ENCODE measurements at regions of chr12 and their contacts with region 1.

Region 1: DNA sequence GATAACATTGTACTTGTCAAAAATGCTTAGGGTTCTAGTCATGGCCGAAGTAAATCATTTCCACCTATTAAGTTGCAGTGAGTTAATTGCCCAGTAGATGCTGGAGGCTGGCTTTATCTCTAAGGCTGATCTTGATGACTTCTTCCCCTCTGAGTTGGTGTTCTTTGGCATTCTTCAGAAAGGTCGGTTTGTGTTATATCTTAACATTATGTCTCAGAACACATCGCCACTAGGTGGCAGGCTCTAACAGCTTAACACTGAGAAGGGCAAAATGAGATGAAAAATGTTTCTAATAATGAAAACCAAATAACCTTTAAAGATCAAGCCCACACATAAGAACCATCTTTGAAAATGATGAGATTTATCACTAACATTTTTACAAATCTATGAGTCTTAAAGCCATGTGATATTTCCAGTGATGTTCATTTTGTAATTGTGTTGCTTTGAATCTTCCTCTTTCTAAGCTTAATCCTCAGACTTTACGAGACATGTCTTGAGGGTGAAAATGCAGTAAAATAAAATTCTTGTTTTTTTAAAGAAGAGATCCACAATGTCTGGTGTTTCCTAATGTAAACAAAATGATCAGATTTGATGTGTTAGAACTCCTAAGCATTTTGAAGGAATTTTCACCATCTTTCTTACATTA is 28.6 kb downstream of the SUDS3 start:
- DNase-seq: peak; percentile 73
- H3K4me3 Mint-ChIP-seq: no peak overlapping the region
- H3K27ac Mint-ChIP-seq: no peak overlapping the region
- H3K4me1 Mint-ChIP-seq: no peaks in the 10 kb centered on the region
- H3K27me3 Mint-ChIP-seq: no peaks in the 10 kb centered on the region
- CTCF ChIP-seq: peak; percentile 65

Region 2: DNA sequence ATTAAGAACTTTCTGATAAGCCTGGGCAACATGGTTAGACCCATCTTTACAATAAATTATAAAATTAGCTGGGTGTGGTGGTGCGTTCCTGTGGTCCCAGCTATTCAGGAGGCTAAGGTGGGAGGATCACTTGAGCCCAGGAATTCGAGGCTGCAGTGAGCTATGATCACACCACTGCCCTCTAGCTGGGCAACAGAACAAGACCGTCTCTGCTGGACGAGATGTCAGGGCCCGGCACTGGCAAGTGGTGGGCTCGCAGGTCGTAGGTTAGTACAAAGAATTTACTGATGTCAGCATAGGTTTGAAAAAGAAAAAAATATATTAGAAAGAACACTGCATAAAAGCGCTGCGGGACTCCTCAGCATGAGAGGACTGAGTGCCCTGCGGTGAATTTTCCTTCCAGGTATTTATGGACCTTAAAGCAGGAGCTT is 285.5 kb before region 1 on chr12:
- CTCF ChIA-PET with region 1: no interaction called
- intact Hi-C with region 1: no loop called
- DNase-seq: no peak
- H3K4me3 Mint-ChIP-seq: no peak overlapping the region
- H3K27ac Mint-ChIP-seq: no peak overlapping the region
- H3K4me1 Mint-ChIP-seq: peaks cover 19% of the 10 kb centered on the region
- H3K27me3 Mint-ChIP-seq: no peaks in the 10 kb centered on the region
- CTCF ChIP-seq: no peak

Region 3: DNA sequence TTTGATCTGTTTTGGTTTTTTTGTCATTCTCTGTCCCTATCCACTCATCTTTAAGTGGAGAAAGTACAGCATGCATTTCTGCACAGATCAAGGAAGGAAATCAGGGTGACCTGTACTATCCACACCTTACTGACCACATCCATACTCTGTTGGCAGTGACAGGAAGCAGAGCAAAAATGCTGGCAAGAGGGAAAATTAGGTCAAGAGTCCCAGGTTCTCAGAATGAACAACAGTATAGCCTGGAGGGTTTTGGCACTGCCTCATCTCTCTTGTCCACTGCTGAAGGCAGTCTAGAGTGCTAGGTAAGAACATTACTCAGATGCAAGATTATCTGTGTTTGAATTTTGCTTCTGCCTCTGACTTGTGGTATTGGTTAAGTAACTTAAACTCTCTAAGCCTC is 102.9 kb before region 1 on chr12:
- CTCF ChIA-PET with region 1: no interaction called
- intact Hi-C with region 1: no loop called
- DNase-seq: peak; percentile 45
- H3K4me3 Mint-ChIP-seq: no peak overlapping the region
- H3K27ac Mint-ChIP-seq: no peak overlapping the region
- H3K4me1 Mint-ChIP-seq: peaks cover 38% of the 10 kb centered on the region
- H3K27me3 Mint-ChIP-seq: no peaks in the 10 kb centered on the region
- CTCF ChIP-seq: no peak

Region 4: GRCh38 chr12:118840399-118840798 is 435.4 kb after region 1 on chr12:
- CTCF ChIA-PET with region 1: no interaction called
- intact Hi-C with region 1: loop called (anchors 1 kb)
- DNase-seq: no peak
- H3K4me3 Mint-ChIP-seq: no peak overlapping the region
- H3K27ac Mint-ChIP-seq: no peak overlapping the region
- H3K4me1 Mint-ChIP-seq: no peaks in the 10 kb centered on the region
- H3K27me3 Mint-ChIP-seq: peaks cover 7% of the 10 kb centered on the region
- CTCF ChIP-seq: no peak

Region 5: GRCh38 chr12:119036878-119037825 is 632.2 kb after region 1 on chr12:
- CTCF ChIA-PET with region 1: no interaction called
- intact Hi-C with region 1: loop called (anchors 5 kb)
- DNase-seq: peak; percentile 37
- H3K4me3 Mint-ChIP-seq: no peak overlapping the region
- H3K27ac Mint-ChIP-seq: no peak overlapping the region
- H3K4me1 Mint-ChIP-seq: no peaks in the 10 kb centered on the region
- H3K27me3 Mint-ChIP-seq: no peaks in the 10 kb centered on the region
- CTCF ChIP-seq: peak; percentile 31